ENCODE measurements at regions of chr3 and their contacts with region 1.

Region 1: DNA sequence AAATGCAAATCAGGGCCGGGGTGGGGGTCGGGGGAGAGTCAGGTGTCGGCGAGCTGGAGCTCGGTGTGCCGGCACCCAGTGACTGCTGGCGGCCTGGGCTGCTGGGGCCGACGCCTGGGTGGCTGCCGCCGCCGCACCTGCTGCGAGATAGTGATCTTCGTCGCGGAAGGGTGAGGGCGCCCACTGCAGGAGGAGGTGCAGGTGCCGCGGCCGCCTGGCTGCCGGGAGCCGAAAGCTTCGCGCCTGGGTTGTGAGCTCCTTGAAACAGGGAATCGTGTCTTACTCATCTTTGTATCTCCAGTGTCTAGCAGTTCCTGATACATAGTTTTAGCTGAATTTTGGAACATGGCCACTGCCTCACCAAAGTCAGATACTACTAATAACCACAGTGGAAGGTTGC is 64.0 kb upstream of the CPOX start:
- DNase-seq: peak; percentile 76
- ATAC-seq: peak; percentile 99
- H3K4me3 Mint-ChIP-seq: peak overlapping the region; percentile 35
- H3K27ac Mint-ChIP-seq: no peak overlapping the region
- H3K4me1 Mint-ChIP-seq: peaks cover 5% of the 10 kb centered on the region
- H3K27me3 Mint-ChIP-seq: peaks cover 23% of the 10 kb centered on the region
- CTCF ChIP-seq: no peak

Region 2: DNA sequence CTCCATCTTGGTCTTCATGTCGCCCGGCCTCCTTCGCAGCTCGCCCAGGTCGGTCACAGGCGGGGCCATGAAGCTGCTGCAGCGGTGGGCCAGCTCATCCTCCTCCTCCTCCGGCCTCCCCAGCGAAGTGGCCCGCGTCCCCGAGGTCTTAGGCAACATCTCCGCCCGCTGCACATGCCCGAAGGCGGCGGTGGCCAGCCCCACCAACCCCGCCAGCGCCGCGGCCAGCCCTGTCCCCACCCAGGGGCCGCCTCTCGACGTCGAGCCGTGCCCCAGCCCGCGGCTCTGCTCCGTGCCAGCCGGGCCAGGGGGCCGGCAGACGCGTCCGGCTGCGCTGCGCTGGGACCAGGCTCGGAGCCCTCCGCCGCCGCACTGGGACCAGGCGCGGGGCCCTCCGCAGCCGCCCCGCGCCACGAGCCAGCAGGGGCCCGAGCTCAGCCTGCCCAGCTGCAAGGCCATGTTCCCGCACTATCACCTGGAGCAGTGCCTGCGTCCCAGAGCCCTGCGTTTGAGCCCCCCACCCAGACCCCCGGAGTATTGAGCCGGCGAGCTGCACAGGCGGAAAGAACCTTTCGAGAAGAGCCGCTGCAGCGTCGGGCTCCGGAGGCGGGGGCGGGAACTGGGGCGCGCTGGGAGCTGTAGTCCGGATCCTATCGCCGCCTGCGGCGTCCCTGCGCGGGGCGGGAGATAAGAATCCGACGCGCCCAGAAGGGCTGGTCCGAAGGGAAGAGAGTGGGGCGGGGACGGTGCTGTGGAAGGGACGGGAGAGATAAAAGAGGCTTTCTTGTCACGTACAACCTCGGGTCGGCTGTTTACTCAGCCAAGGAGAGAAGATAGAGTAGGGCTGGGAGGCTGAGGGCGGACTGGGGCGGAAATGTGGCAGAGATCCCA is 64.2 kb before region 1 on chr3 and contains the start of gene CPOX:
- CTCF ChIA-PET with region 1: interaction called, 23 read pairs
- POLR2A ChIA-PET with region 1: no interaction called
- DNase-seq: peak; percentile 88
- ATAC-seq: peak; percentile 94
- H3K4me3 Mint-ChIP-seq: peak within 1 kb of the TSS; percentile 96
- H3K27ac Mint-ChIP-seq: peak within 1 kb of the TSS; percentile 98
- H3K4me1 Mint-ChIP-seq: peaks cover 31% of the 10 kb centered on the region
- H3K27me3 Mint-ChIP-seq: no peaks in the 10 kb centered on the region
- CTCF ChIP-seq: no peak
- total RNA-seq, gene CPOX: 31.5 to 33.4 TPM (median 33.1 TPM) in 3 replicates

Region 3: DNA sequence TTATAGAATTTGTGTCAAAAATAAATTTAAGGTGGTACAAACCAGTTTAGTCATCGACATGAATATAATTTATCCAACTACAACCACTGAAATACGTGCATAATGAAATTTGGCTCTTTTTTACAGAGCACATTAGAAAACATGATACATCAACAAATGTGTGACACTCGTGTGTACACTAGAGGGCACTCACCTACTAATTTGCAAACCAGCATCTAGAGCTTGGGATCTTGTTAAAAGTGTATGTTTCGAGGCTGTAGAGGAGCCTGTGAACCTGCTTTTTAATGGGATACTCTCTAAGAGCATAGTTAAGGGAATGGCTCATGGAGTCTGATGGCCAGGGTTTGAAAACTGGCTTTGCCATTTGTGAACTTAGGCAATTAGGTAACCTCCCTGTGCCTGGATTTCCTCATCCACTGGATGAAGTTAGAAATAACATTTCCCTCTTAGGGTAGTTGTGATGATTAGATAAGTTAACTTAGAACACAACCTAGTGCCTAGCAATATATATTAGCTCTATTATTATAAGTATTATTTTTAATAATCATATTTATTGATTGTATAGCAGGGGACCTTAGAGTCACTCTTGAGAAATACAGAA is 55.3 kb before region 1 on chr3:
- CTCF ChIA-PET with region 1: interaction called, 62 read pairs
- POLR2A ChIA-PET with region 1: no interaction called
- DNase-seq: no peak
- ATAC-seq: peak; percentile 91
- H3K4me3 Mint-ChIP-seq: no peak overlapping the region
- H3K27ac Mint-ChIP-seq: no peak overlapping the region
- H3K4me1 Mint-ChIP-seq: no peaks in the 10 kb centered on the region
- H3K27me3 Mint-ChIP-seq: no peaks in the 10 kb centered on the region; the same call in 1 of the 2 replicates
- CTCF ChIP-seq: peak; percentile 43; the same call in 1 of the 2 replicates

Region 4: DNA sequence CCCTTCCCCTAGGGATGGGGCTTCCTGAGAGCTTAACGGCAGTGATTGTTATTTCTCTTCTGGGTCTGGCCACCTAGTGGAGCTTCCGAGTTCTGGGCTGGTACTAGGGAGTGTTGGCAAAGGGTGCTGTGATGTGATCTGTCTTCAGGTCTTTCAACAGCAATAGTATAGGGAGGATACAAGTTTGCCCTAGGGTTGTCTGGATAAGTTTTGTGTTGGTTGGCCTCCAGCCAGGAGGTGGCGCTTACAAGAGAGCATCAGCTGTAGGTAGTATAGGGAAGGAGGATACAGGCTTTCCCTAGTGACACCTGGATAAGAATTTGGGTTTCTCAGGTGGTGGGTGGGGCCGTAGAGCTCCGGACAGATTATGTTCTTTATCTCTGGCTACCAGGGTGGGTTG is 44.9 kb before region 1 on chr3:
- CTCF ChIA-PET with region 1: interaction called, 48 read pairs
- POLR2A ChIA-PET with region 1: interaction called, 3 read pairs
- DNase-seq: peak; percentile 56
- ATAC-seq: peak; percentile 97
- H3K4me3 Mint-ChIP-seq: no peak overlapping the region
- H3K27ac Mint-ChIP-seq: no peak overlapping the region
- H3K4me1 Mint-ChIP-seq: 0 out of 2 replicates have a peak, but pooled peaks cover 8% of the 10 kb centered on the region
- H3K27me3 Mint-ChIP-seq: no peaks in the 10 kb centered on the region
- CTCF ChIP-seq: peak; percentile 30; the same call in 1 of the 2 replicates

Region 5: GRCh38 chr3:98623572-98624280 is 33.7 kb before region 1 on chr3:
- CTCF ChIA-PET with region 1: interaction called, 11 read pairs
- POLR2A ChIA-PET with region 1: no interaction called
- DNase-seq: no peak
- ATAC-seq: peak; percentile 87
- H3K4me3 Mint-ChIP-seq: no peak overlapping the region
- H3K27ac Mint-ChIP-seq: peak overlapping the region; percentile 69
- H3K4me1 Mint-ChIP-seq: peaks cover 24% of the 10 kb centered on the region
- H3K27me3 Mint-ChIP-seq: no peaks in the 10 kb centered on the region
- CTCF ChIP-seq: no peak

Region 6: GRCh38 chr3:98645039-98645438 is 12.4 kb before region 1 on chr3:
- CTCF ChIA-PET with region 1: interaction called, 19 read pairs
- POLR2A ChIA-PET with region 1: no interaction called
- DNase-seq: no peak
- ATAC-seq: peak; percentile 73
- H3K4me3 Mint-ChIP-seq: no peak overlapping the region
- H3K27ac Mint-ChIP-seq: no peak overlapping the region
- H3K4me1 Mint-ChIP-seq: peaks cover 8% of the 10 kb centered on the region; the same call in 1 of the 2 replicates
- H3K27me3 Mint-ChIP-seq: no peaks in the 10 kb centered on the region
- CTCF ChIP-seq: no peak

Region 7: DNA sequence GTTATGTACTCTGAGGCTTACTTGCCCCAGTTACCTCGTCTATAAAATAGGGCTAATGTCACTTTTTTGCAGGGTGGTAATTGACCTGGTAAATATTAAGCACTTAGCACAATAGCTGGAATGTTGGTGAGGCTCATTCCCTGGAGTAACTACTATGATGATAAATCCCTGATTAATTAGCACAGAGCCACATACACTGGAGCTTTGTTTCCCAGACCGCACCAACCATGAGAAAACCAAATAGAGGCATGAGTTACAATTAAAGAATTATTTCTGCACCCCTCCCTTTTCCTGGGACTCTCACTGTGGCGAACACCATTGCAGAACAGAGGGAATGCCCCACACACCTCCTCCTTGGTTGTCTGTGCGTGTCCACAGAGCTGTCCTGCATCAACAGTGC is 12.6 kb after region 1 on chr3:
- CTCF ChIA-PET with region 1: interaction called, 11 read pairs
- POLR2A ChIA-PET with region 1: no interaction called
- DNase-seq: no peak
- ATAC-seq: no peak
- H3K4me3 Mint-ChIP-seq: no peak overlapping the region
- H3K27ac Mint-ChIP-seq: no peak overlapping the region
- H3K4me1 Mint-ChIP-seq: no peaks in the 10 kb centered on the region
- H3K27me3 Mint-ChIP-seq: no peaks in the 10 kb centered on the region
- CTCF ChIP-seq: no peak

Measured in WTC11 (cell line).